ENCODE measurements at regions of chr1 and their contacts with region 1.

Region 1: GRCh38 chr1:90864681-90865080 is 147.6 kb upstream of the BARHL2 start:
- DNase-seq: no peak
- ATAC-seq: no peak
- H3K4me3 ChIP-seq: no peak overlapping the region
- H3K27ac ChIP-seq: no peak overlapping the region
- H3K4me1 ChIP-seq: no peaks in the 10 kb centered on the region
- H3K27me3 ChIP-seq: no peaks in the 10 kb centered on the region
- CTCF ChIP-seq: no peak
- POLR2A ChIP-seq: no peak

Region 2: GRCh38 chr1:90902672-90903071 is 38.0 kb after region 1 on chr1:
- intact Hi-C with region 1: loop called in 1 of 10 experiments (anchors 2 kb)
- DNase-seq: no peak
- ATAC-seq: no peak
- H3K4me3 ChIP-seq: no peak overlapping the region
- H3K27ac ChIP-seq: no peak overlapping the region
- H3K4me1 ChIP-seq: no peaks in the 10 kb centered on the region
- H3K27me3 ChIP-seq: no peaks in the 10 kb centered on the region
- CTCF ChIP-seq: no peak
- POLR2A ChIP-seq: no peak

Region 3: DNA sequence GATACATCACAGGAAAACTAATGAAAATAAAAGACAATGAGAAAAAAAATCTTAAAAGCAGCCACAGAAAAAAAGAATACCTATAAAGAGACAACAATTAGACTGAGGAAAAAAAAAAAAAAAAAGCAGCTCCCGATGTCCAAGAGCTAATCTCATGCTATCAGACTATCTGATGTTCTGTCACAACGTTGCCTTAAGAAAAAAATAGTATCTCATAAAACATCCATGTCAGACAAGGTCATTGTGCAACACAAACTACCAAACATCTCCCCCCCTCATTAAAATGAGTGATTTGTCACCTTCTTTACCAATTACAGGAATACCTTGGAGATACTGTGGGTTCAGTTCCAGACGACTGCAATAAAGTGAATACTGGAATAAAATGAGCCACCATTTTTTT is 88.2 kb after region 1 on chr1:
- intact Hi-C with region 1: no loop called
- DNase-seq: no peak
- ATAC-seq: no peak
- H3K4me3 ChIP-seq: no peak overlapping the region
- H3K27ac ChIP-seq: no peak overlapping the region
- H3K4me1 ChIP-seq: peaks cover 0 to 25% (median 8%) of the 10 kb centered on the region in 12 donors
- H3K27me3 ChIP-seq: no peaks in the 10 kb centered on the region
- CTCF ChIP-seq: no peak
- POLR2A ChIP-seq: no peak

Measured in heart left ventricle (tissue), 16 donors.